ENCODE measurements at regions of chr12 and their contacts with region 1.

Region 1: DNA sequence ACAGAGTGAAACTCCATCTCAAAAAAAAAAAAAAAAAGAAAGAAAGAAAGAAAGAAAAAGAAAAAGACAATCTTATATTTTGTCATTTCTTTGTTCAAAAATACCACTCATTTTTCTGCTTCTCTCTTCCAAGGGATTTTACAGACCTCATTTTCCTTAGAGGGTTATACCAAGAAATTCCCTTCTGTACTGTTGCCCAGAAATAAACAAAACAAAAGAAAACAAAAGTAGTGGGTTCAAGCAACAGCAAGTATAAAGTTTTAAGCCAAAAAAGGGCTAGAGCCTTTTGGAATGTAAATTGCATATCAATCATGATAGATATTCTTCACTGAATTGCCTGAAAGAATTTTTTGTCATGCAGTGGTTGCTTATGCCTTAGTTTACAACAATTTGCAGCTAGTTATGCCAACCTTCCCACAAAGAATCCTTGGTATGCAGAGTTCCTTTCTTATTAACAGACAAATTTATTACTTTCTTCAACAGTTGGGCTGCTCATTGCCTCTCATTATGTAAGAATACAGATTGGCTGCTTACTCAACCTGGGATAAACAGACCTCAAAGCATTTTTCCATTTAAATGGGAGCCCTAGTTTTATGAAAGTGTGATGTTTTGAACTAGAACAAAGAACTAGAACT is 129.1 kb upstream of the PPFIA2 start:
- DNase-seq: no peak
- ATAC-seq: no peak
- H3K4me3 ChIP-seq: no peak overlapping the region
- H3K27ac ChIP-seq: no peak overlapping the region
- H3K4me1 ChIP-seq: no peaks in the 10 kb centered on the region
- H3K27me3 ChIP-seq: no peaks in the 10 kb centered on the region
- CTCF ChIP-seq: no peak
- EP300 ChIP-seq: no peak
- POLR2A ChIP-seq: no peak
- RAD21 ChIP-seq: no peak

Region 2: DNA sequence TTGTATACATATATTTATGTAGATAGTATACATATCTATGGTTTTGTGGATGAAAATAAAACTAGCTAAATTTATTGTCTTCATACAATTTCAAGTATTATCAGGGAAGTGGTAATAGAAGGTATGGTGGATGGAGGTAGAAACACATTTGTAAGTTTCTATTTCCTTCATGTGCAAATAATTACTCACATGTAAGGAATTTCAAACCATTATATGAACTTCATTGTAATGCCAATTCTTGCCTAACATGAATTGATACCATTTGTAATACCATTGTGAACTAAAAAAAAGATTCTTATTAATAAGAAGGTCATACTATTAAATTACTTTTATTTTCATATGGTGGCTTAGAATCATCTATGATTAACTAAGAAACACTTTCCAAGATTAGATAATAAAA is 109.0 kb before region 1 on chr12:
- CTCF ChIA-PET with region 1: no interaction called
- POLR2A ChIA-PET with region 1: interaction called, 17 read pairs
- RAD21 ChIA-PET with region 1: no interaction called
- SMC1A ChIA-PET with region 1: no interaction called
- in situ Hi-C with region 1: no loop called
- intact Hi-C with region 1: no loop called
- DNase-seq: no peak
- ATAC-seq: no peak
- H3K4me3 ChIP-seq: no peak overlapping the region
- H3K27ac ChIP-seq: no peak overlapping the region
- H3K4me1 ChIP-seq: no peaks in the 10 kb centered on the region
- H3K27me3 ChIP-seq: no peaks in the 10 kb centered on the region
- CTCF ChIP-seq: no peak
- EP300 ChIP-seq: no peak
- POLR2A ChIP-seq: no peak
- RAD21 ChIP-seq: no peak

Measured in GM12878 (cell line).